B cell (primary cell): ENCODE measurements at regions of chr17 and their contacts with region 1.

Region 1: GRCh38 chr17:14926526-14927122 is 338.5 kb downstream of the PMP22 start:
- DNase-seq: peak; percentile 68
- ATAC-seq: no peak
- H3K4me3 ChIP-seq: no peak overlapping the region
- H3K4me3 Mint-ChIP-seq: no peak overlapping the region
- H3K27ac ChIP-seq: no peak overlapping the region
- H3K27ac Mint-ChIP-seq: no peak overlapping the region
- H3K4me1 ChIP-seq: no peaks in the 10 kb centered on the region
- H3K4me1 Mint-ChIP-seq: no peaks in the 10 kb centered on the region
- H3K27me3 ChIP-seq: no peaks in the 10 kb centered on the region
- H3K27me3 Mint-ChIP-seq: peaks cover 24% of the 10 kb centered on the region
- CTCF ChIP-seq: peak; percentile 89

Region 2: GRCh38 chr17:13031718-13032350 is 1894.8 kb before region 1 on chr17:
- CTCF ChIA-PET with region 1: interaction called, 14 read pairs
- POLR2A ChIA-PET with region 1: no interaction called
- intact Hi-C with region 1: no loop called
- DNase-seq: peak; percentile 68
- ATAC-seq: peak; percentile 73
- H3K4me3 ChIP-seq: peak overlapping the region in 2 of 5 experiments; percentile 27 to 36
- H3K4me3 Mint-ChIP-seq: peak overlapping the region; percentile 66
- H3K27ac ChIP-seq: no peak overlapping the region
- H3K27ac Mint-ChIP-seq: no peak overlapping the region
- H3K4me1 ChIP-seq: peaks cover 0 to 5% of the 10 kb centered on the region in 2 donors
- H3K4me1 Mint-ChIP-seq: peaks cover 6% of the 10 kb centered on the region
- H3K27me3 ChIP-seq: peaks cover 0 to 3% (median 0%) of the 10 kb centered on the region in 4 experiments
- H3K27me3 Mint-ChIP-seq: peaks cover 19% of the 10 kb centered on the region
- CTCF ChIP-seq: peak; percentile 86

Region 3: GRCh38 chr17:14211801-14212200 is 714.8 kb before region 1 on chr17:
- CTCF ChIA-PET with region 1: interaction called, 11 read pairs
- POLR2A ChIA-PET with region 1: no interaction called
- intact Hi-C with region 1: no loop called
- DNase-seq: peak; percentile 54
- ATAC-seq: no peak
- H3K4me3 ChIP-seq: no peak overlapping the region
- H3K4me3 Mint-ChIP-seq: no peak overlapping the region
- H3K27ac ChIP-seq: no peak overlapping the region
- H3K27ac Mint-ChIP-seq: no peak overlapping the region
- H3K4me1 ChIP-seq: no peaks in the 10 kb centered on the region
- H3K4me1 Mint-ChIP-seq: no peaks in the 10 kb centered on the region
- H3K27me3 ChIP-seq: peaks cover 0 to 7% (median 0%) of the 10 kb centered on the region in 4 experiments
- H3K27me3 Mint-ChIP-seq: no peaks in the 10 kb centered on the region
- CTCF ChIP-seq: peak; percentile 49

Region 4: DNA sequence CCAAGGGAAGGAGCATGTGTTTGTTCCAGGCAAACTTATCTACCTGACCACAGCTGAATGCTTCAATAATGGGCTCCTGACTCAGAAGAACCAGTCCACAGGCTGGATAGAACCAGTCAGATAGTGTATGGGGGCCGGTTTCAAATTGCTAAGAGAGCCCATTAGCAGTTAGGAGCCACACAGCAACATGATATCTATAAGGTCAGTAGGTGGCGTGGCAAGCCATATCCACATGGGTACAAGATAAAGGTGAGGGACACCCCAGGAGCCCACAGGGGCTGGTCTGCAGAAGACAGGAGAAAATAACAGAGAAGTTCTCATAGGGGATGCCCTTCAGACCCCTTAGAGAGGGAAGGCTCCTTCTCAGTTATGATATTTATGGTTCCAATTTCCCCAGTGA is 658.4 kb before region 1 on chr17:
- CTCF ChIA-PET with region 1: interaction called, 16 read pairs
- POLR2A ChIA-PET with region 1: no interaction called
- intact Hi-C with region 1: no loop called
- DNase-seq: peak; percentile 12
- ATAC-seq: no peak
- H3K4me3 ChIP-seq: no peak overlapping the region
- H3K4me3 Mint-ChIP-seq: no peak overlapping the region
- H3K27ac ChIP-seq: no peak overlapping the region
- H3K27ac Mint-ChIP-seq: no peak overlapping the region
- H3K4me1 ChIP-seq: no peaks in the 10 kb centered on the region
- H3K4me1 Mint-ChIP-seq: no peaks in the 10 kb centered on the region
- H3K27me3 ChIP-seq: peaks cover 0 to 3% (median 0%) of the 10 kb centered on the region in 4 experiments
- H3K27me3 Mint-ChIP-seq: peaks cover 21% of the 10 kb centered on the region
- CTCF ChIP-seq: no peak

Region 5: GRCh38 chr17:14294876-14295275 is 631.7 kb before region 1 on chr17:
- CTCF ChIA-PET with region 1: interaction called, 15 read pairs
- POLR2A ChIA-PET with region 1: no interaction called
- intact Hi-C with region 1: no loop called
- DNase-seq: no peak
- ATAC-seq: no peak
- H3K4me3 ChIP-seq: no peak overlapping the region
- H3K4me3 Mint-ChIP-seq: no peak overlapping the region
- H3K27ac ChIP-seq: no peak overlapping the region
- H3K27ac Mint-ChIP-seq: no peak overlapping the region
- H3K4me1 ChIP-seq: peaks cover 21 to 29% of the 10 kb centered on the region in 2 donors
- H3K4me1 Mint-ChIP-seq: peaks cover 29% of the 10 kb centered on the region
- H3K27me3 ChIP-seq: peaks cover 0 to 58% (median 47%) of the 10 kb centered on the region in 4 experiments
- H3K27me3 Mint-ChIP-seq: peaks cover 76% of the 10 kb centered on the region
- CTCF ChIP-seq: no peak

Region 6: DNA sequence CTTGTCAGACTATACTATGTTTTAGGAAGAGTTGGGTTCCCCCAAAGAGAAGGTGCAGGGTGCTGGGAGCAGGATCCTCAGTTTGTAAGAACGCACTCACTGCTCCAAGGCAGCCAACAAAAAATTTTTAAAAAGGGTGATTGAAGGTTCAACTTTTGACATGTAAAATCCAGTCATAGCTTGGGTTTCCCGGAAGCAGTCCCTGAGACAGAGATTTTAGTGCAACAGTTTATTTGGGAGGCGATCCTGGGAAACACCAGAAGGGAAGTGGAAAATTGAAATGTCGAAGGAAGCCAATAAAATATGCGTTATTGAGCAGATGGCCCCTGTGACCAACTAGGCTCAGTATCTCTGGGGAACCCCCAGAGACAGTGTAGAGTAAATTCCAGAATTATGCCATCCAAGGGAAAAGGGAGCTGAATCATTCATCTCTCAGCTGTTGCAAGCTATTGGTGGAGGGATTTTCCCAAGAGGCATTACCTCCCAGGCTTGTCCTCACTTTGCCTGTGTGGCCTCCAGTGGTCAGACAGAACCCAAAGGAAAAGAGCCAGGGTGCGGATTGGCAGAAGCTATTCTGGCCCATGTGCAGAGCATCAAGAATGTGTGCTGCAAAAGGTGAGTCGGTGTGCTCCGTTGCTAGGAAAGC is 552.9 kb before region 1 on chr17:
- CTCF ChIA-PET with region 1: no interaction called
- POLR2A ChIA-PET with region 1: no interaction called
- intact Hi-C with region 1: no loop called
- DNase-seq: no peak
- ATAC-seq: no peak
- H3K4me3 ChIP-seq: no peak overlapping the region
- H3K4me3 Mint-ChIP-seq: no peak overlapping the region
- H3K27ac ChIP-seq: no peak overlapping the region
- H3K27ac Mint-ChIP-seq: no peak overlapping the region
- H3K4me1 ChIP-seq: no peaks in the 10 kb centered on the region
- H3K4me1 Mint-ChIP-seq: no peaks in the 10 kb centered on the region
- H3K27me3 ChIP-seq: peaks cover 0 to 7% (median 3%) of the 10 kb centered on the region in 4 experiments
- H3K27me3 Mint-ChIP-seq: peaks cover 15% of the 10 kb centered on the region
- CTCF ChIP-seq: no peak

Region 7: DNA sequence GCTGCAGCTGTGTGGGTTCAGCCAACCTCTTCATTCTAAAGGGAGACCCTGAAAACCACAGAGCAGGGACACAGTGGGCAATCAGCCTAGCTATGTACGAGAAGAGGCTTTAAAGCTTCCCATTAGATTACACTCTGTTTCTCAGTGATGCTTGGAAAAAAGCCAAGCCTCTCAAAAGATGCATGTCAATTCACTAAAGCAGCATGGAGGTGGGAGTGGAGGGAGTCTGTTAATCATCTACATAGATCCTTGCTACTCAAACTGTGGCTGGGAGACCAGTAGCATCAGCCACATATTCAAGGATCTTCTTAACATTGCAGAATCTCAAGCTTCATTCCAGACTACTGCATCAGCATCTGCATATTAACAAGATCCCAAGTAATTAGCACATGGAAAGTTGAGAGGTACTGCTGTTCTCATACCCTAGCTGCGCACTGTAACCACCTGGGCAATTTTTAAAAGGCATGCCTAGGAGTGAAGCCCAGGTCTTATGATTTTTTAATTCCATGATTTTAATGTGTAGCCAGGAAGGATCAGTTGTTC is 32.6 kb after region 1 on chr17:
- CTCF ChIA-PET with region 1: no interaction called
- POLR2A ChIA-PET with region 1: no interaction called
- intact Hi-C with region 1: no loop called
- DNase-seq: no peak
- ATAC-seq: no peak
- H3K4me3 ChIP-seq: no peak overlapping the region
- H3K4me3 Mint-ChIP-seq: no peak overlapping the region
- H3K27ac ChIP-seq: no peak overlapping the region
- H3K27ac Mint-ChIP-seq: no peak overlapping the region
- H3K4me1 ChIP-seq: no peaks in the 10 kb centered on the region
- H3K4me1 Mint-ChIP-seq: no peaks in the 10 kb centered on the region
- H3K27me3 ChIP-seq: peaks cover 0 to 4% (median 0%) of the 10 kb centered on the region in 4 experiments
- H3K27me3 Mint-ChIP-seq: peaks cover 3% of the 10 kb centered on the region
- CTCF ChIP-seq: no peak

Region 8: GRCh38 chr17:15000661-15001060 is 74.0 kb after region 1 on chr17:
- CTCF ChIA-PET with region 1: no interaction called
- POLR2A ChIA-PET with region 1: no interaction called
- intact Hi-C with region 1: no loop called
- DNase-seq: no peak
- ATAC-seq: no peak
- H3K4me3 ChIP-seq: no peak overlapping the region
- H3K4me3 Mint-ChIP-seq: no peak overlapping the region
- H3K27ac ChIP-seq: no peak overlapping the region
- H3K27ac Mint-ChIP-seq: no peak overlapping the region
- H3K4me1 ChIP-seq: no peaks in the 10 kb centered on the region
- H3K4me1 Mint-ChIP-seq: no peaks in the 10 kb centered on the region
- H3K27me3 ChIP-seq: no peaks in the 10 kb centered on the region
- H3K27me3 Mint-ChIP-seq: no peaks in the 10 kb centered on the region
- CTCF ChIP-seq: no peak

Region 9: DNA sequence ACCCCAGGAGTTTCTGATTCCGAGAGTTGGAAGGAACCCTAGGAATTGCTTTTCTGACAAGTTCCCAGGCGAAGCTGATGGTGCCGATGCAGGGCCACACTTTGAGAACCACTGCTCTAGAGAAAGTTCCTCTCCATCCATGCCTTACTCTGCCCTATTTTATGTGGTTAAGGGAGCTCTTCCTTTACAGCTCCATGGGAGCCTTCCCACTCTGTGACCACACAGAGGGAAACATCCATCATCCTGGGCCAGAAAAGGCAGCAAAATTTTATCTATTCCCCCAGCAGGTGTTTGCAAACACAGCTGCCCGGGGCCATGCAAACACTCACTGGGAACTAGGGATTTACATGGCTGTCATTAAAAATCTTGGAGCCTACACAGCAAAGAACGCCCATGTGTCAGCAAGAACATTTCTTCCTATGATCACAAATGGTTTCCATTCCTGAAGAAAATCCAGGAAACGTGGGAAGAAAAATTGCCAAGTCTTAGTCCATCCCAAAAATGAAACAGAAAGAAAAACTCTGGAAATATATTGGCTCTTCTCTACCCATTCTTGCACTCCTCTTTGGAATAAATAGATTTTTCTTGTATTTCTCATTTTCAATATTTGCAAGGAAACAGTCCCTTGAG is 85.8 kb after region 1 on chr17:
- CTCF ChIA-PET with region 1: no interaction called
- POLR2A ChIA-PET with region 1: no interaction called
- intact Hi-C with region 1: no loop called
- DNase-seq: no peak
- ATAC-seq: no peak
- H3K4me3 ChIP-seq: no peak overlapping the region
- H3K4me3 Mint-ChIP-seq: no peak overlapping the region
- H3K27ac ChIP-seq: no peak overlapping the region
- H3K27ac Mint-ChIP-seq: no peak overlapping the region
- H3K4me1 ChIP-seq: no peaks in the 10 kb centered on the region
- H3K4me1 Mint-ChIP-seq: no peaks in the 10 kb centered on the region
- H3K27me3 ChIP-seq: no peaks in the 10 kb centered on the region
- H3K27me3 Mint-ChIP-seq: peaks cover 3% of the 10 kb centered on the region
- CTCF ChIP-seq: no peak